CD8-positive, alpha-beta T cell (primary cell): ENCODE measurements at regions of chr3 and their contacts with region 1.

Region 1: DNA sequence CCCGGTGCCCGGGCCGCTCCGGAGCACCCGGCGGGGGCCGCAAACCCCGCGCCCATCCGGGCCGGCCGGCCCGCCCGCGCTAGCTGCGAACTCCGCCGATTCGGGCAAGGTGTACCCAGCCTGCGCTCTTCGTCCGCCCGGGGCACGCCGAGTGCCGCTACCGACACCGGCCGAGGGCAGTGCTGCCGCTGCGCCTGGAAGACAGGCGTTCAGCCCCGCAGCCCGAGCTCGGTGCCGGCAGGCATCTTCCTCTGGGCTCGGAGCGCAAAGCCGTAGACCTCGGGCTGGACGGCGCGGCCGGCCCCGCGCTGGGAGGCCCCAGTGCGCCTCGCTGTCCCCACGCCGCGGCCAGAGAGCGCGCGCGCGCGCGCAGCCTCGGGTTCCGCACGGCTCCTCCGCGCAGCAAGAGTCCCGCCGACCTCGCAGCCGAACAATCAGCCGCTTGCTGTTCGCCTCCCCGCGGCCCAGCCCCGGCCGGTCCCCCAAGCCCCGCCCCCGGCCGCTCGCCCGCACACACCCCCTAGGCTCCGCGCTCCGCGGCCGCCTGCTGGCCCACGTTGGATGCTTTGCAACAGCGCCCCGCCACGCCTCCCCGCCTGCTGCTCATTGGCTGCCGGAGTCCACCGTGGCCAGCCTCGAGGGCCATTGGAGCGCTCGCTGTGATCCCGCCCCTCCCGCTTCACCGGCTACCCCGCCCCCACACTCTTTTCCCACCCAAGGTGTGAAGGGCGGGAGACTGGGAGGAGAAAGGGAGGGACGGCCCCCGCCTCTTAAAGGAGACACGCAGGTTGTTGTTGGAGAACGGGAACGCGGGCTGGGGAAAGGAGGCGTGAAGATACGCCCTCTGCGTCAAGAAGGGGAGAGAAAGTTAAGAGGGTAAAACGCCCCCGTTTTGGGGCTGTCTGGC is at the start of gene LRIG1:
- DNase-seq: peak; percentile 95 to 98 (median 97)
- ATAC-seq: peak; percentile 94
- H3K4me3 ChIP-seq: peak within 1 kb of the TSS; percentile 54 to 66
- H3K4me3 Mint-ChIP-seq: peak within 1 kb of the TSS; percentile 94
- H3K27ac ChIP-seq: peak within 1 kb of the TSS in 1 of 2 experiments; percentile 29
- H3K27ac Mint-ChIP-seq: peak within 1 kb of the TSS; percentile 69
- H3K4me1 ChIP-seq: peaks cover 35% of the 10 kb centered on the region
- H3K4me1 Mint-ChIP-seq: peaks cover 60% of the 10 kb centered on the region
- H3K27me3 ChIP-seq: peaks cover 0 to 4% of the 10 kb centered on the region in 2 experiments
- H3K27me3 Mint-ChIP-seq: peaks cover 8% of the 10 kb centered on the region
- CTCF ChIP-seq: peak; percentile 54
- total RNA-seq, gene LRIG1: 38.2 to 39.4 TPM

Region 2: GRCh38 chr3:65796676-65797075 is 704.2 kb before region 1 on chr3:
- CTCF ChIA-PET with region 1: no interaction called
- POLR2A ChIA-PET with region 1: no interaction called
- intact Hi-C with region 1: no loop called
- DNase-seq: no peak
- ATAC-seq: no peak
- H3K4me3 ChIP-seq: no peak overlapping the region
- H3K4me3 Mint-ChIP-seq: no peak overlapping the region
- H3K27ac ChIP-seq: no peak overlapping the region
- H3K27ac Mint-ChIP-seq: no peak overlapping the region
- H3K4me1 ChIP-seq: no peaks in the 10 kb centered on the region
- H3K4me1 Mint-ChIP-seq: no peaks in the 10 kb centered on the region
- H3K27me3 ChIP-seq: no peaks in the 10 kb centered on the region
- H3K27me3 Mint-ChIP-seq: no peaks in the 10 kb centered on the region
- CTCF ChIP-seq: no peak

Region 3: GRCh38 chr3:66220602-66221377 is 280.0 kb before region 1 on chr3 and contains the start of gene SLC25A26:
- CTCF ChIA-PET with region 1: no interaction called
- POLR2A ChIA-PET with region 1: interaction called, 4 read pairs
- intact Hi-C with region 1: loop called (anchors 1 to 2 kb)
- DNase-seq: peak; percentile 94 to 99 (median 97)
- ATAC-seq: peak; percentile 98
- H3K4me3 ChIP-seq: peak within 1 kb of the TSS; percentile 73 to 91
- H3K4me3 Mint-ChIP-seq: peak within 1 kb of the TSS; percentile 90
- H3K27ac ChIP-seq: peak within 1 kb of the TSS; percentile 58 to 82
- H3K27ac Mint-ChIP-seq: peak within 1 kb of the TSS; percentile 90
- H3K4me1 ChIP-seq: peaks cover 14% of the 10 kb centered on the region
- H3K4me1 Mint-ChIP-seq: peaks cover 35% of the 10 kb centered on the region
- H3K27me3 ChIP-seq: no peaks in the 10 kb centered on the region
- H3K27me3 Mint-ChIP-seq: peaks cover 3% of the 10 kb centered on the region
- CTCF ChIP-seq: no peak
- total RNA-seq, gene SLC25A26: 32.0 to 37.4 TPM

Region 4: GRCh38 chr3:66394019-66394752 is 106.6 kb before region 1 on chr3:
- CTCF ChIA-PET with region 1: interaction called, 3 read pairs
- POLR2A ChIA-PET with region 1: interaction called, 4 read pairs
- intact Hi-C with region 1: loop called in 1 of 2 experiments (anchors 1 kb)
- DNase-seq: peak; percentile 32 to 84 (median 60)
- ATAC-seq: peak; percentile 93
- H3K4me3 ChIP-seq: peak overlapping the region; percentile 16 to 35
- H3K4me3 Mint-ChIP-seq: peak overlapping the region; percentile 85
- H3K27ac ChIP-seq: peak overlapping the region; percentile 57 to 72
- H3K27ac Mint-ChIP-seq: peak overlapping the region; percentile 95
- H3K4me1 ChIP-seq: peaks cover 24% of the 10 kb centered on the region
- H3K4me1 Mint-ChIP-seq: peaks cover 56% of the 10 kb centered on the region
- H3K27me3 ChIP-seq: no peaks in the 10 kb centered on the region
- H3K27me3 Mint-ChIP-seq: no peaks in the 10 kb centered on the region
- CTCF ChIP-seq: no peak

Region 5: GRCh38 chr3:66456711-66457173 is 44.1 kb before region 1 on chr3:
- CTCF ChIA-PET with region 1: no interaction called
- POLR2A ChIA-PET with region 1: interaction called, 4 read pairs
- intact Hi-C with region 1: loop called in 1 of 2 experiments (anchors 5 kb)
- DNase-seq: peak in 2 of 9 experiments; percentile 58 to 62
- ATAC-seq: peak; percentile 36
- H3K4me3 ChIP-seq: no peak overlapping the region
- H3K4me3 Mint-ChIP-seq: no peak overlapping the region
- H3K27ac ChIP-seq: no peak overlapping the region
- H3K27ac Mint-ChIP-seq: no peak overlapping the region
- H3K4me1 ChIP-seq: no peaks in the 10 kb centered on the region
- H3K4me1 Mint-ChIP-seq: peaks cover 7% of the 10 kb centered on the region
- H3K27me3 ChIP-seq: no peaks in the 10 kb centered on the region
- H3K27me3 Mint-ChIP-seq: no peaks in the 10 kb centered on the region
- CTCF ChIP-seq: no peak

Region 6: GRCh38 chr3:66472313-66473134 is 28.3 kb before region 1 on chr3:
- CTCF ChIA-PET with region 1: no interaction called
- POLR2A ChIA-PET with region 1: interaction called, 6 read pairs
- intact Hi-C with region 1: loop called in 1 of 2 experiments (anchors 2 kb)
- DNase-seq: peak in 4 of 9 experiments; percentile 21 to 58 (median 40)
- ATAC-seq: peak; percentile 74
- H3K4me3 ChIP-seq: peak overlapping the region in 1 of 2 experiments; percentile 25
- H3K4me3 Mint-ChIP-seq: peak overlapping the region; percentile 51
- H3K27ac ChIP-seq: no peak overlapping the region
- H3K27ac Mint-ChIP-seq: peak overlapping the region; percentile 18
- H3K4me1 ChIP-seq: peaks cover 14% of the 10 kb centered on the region
- H3K4me1 Mint-ChIP-seq: peaks cover 36% of the 10 kb centered on the region
- H3K27me3 ChIP-seq: no peaks in the 10 kb centered on the region
- H3K27me3 Mint-ChIP-seq: no peaks in the 10 kb centered on the region
- CTCF ChIP-seq: no peak

Region 7: DNA sequence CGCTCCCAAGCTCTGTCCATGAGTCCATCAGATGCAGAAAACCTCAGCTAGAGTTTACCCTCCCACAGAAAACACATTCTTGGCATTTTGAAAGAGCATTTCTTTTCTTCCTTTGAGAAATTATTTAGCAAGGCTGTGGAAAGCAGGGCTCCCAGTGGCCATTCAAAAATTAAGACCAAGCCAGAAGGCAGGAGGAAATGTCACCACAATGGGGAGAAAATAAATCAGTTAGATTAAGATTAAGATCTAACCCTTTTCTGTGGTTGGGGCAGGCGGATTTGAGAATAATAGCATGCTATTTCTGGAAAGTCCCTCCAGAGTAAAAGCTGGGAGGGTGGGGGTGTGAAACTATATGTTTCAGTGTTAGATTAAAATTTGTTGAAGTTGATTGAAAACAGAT is 20.2 kb before region 1 on chr3:
- CTCF ChIA-PET with region 1: no interaction called
- POLR2A ChIA-PET with region 1: interaction called, 6 read pairs
- intact Hi-C with region 1: loop called in 1 of 2 experiments (anchors 2 kb)
- DNase-seq: peak in 3 of 9 experiments; percentile 45 to 77 (median 70)
- ATAC-seq: peak; percentile 66
- H3K4me3 ChIP-seq: no peak overlapping the region
- H3K4me3 Mint-ChIP-seq: peak overlapping the region; percentile 51
- H3K27ac ChIP-seq: no peak overlapping the region
- H3K27ac Mint-ChIP-seq: peak overlapping the region; percentile 32
- H3K4me1 ChIP-seq: peaks cover 32% of the 10 kb centered on the region
- H3K4me1 Mint-ChIP-seq: peaks cover 69% of the 10 kb centered on the region
- H3K27me3 ChIP-seq: no peaks in the 10 kb centered on the region
- H3K27me3 Mint-ChIP-seq: no peaks in the 10 kb centered on the region
- CTCF ChIP-seq: no peak

Region 8: DNA sequence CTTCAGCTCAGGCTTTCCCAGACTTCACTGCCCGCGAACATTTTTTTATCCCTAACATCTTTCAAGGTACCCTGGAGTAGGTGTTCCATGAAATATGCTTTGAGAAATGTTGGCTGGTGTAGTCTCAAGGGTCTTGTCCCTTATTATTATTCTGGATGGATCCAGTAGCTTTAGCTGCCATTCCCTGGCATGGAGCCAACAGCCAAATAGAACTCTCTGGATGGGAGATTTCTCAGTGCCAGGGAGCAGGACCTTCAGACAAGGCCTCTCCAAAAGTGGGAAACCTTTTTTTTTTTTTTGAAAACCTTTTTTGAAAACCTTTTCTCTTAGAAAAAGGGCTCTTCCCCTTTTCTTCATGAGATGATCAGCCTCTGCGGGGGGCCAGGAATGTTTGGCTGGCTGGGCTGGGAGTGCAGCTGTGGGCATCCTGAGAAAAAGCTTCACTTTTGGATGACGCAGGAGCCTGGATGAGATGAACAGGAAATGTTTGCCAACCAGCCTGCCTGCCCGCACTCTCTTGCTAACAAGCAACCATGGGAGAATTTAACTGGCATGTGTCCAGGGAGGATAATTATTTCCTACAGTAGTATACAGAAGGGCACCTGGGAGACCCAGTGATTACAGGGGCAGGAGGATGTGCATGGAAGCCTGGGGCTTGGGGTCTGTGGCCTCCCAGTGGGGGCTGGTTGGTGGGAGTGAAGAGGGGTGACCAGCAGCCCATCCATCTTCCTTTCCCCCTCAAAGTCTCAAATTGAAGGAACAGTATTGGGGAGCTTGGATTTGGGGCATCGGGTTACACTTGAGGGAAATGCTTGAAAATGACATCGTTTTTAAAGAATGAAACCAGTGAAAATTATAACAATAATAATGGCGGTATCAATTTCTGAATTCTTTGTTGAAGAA is 109.1 kb after region 1 on chr3:
- CTCF ChIA-PET with region 1: no interaction called
- POLR2A ChIA-PET with region 1: no interaction called
- intact Hi-C with region 1: no loop called
- DNase-seq: no peak
- ATAC-seq: no peak
- H3K4me3 ChIP-seq: no peak overlapping the region
- H3K4me3 Mint-ChIP-seq: no peak overlapping the region
- H3K27ac ChIP-seq: no peak overlapping the region
- H3K27ac Mint-ChIP-seq: no peak overlapping the region
- H3K4me1 ChIP-seq: peaks cover 2% of the 10 kb centered on the region
- H3K4me1 Mint-ChIP-seq: peaks cover 6% of the 10 kb centered on the region
- H3K27me3 ChIP-seq: no peaks in the 10 kb centered on the region
- H3K27me3 Mint-ChIP-seq: no peaks in the 10 kb centered on the region
- CTCF ChIP-seq: no peak

Region 9: DNA sequence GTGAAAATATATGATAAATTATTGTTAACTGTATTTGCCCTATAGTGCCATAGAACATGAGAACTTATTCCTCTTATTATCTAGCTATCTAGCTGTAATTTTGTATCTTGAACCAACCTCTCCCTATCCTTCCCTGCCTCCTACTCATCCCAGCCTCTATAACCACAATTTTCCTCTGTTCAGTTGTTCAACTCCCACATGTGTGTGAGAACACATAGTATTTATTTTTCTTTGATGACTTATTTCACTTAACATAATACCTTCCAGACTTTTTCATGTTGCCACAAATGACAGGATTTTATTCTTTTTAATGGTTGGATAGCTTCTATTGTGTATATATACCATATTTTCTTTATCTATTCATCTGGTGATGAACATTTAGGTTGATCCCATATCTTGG is 1239.0 kb after region 1 on chr3:
- CTCF ChIA-PET with region 1: no interaction called
- POLR2A ChIA-PET with region 1: no interaction called
- intact Hi-C with region 1: no loop called
- DNase-seq: no peak
- ATAC-seq: no peak
- H3K4me3 ChIP-seq: no peak overlapping the region
- H3K4me3 Mint-ChIP-seq: no peak overlapping the region
- H3K27ac ChIP-seq: peak overlapping the region in 1 of 2 experiments; percentile 27
- H3K27ac Mint-ChIP-seq: peak overlapping the region; percentile 93
- H3K4me1 ChIP-seq: peaks cover 60% of the 10 kb centered on the region
- H3K4me1 Mint-ChIP-seq: peaks cover 75% of the 10 kb centered on the region
- H3K27me3 ChIP-seq: no peaks in the 10 kb centered on the region
- H3K27me3 Mint-ChIP-seq: no peaks in the 10 kb centered on the region
- CTCF ChIP-seq: no peak